IMR-90 (cell line): ENCODE measurements at regions of chr13 and their contacts with region 1.

Region 1: DNA sequence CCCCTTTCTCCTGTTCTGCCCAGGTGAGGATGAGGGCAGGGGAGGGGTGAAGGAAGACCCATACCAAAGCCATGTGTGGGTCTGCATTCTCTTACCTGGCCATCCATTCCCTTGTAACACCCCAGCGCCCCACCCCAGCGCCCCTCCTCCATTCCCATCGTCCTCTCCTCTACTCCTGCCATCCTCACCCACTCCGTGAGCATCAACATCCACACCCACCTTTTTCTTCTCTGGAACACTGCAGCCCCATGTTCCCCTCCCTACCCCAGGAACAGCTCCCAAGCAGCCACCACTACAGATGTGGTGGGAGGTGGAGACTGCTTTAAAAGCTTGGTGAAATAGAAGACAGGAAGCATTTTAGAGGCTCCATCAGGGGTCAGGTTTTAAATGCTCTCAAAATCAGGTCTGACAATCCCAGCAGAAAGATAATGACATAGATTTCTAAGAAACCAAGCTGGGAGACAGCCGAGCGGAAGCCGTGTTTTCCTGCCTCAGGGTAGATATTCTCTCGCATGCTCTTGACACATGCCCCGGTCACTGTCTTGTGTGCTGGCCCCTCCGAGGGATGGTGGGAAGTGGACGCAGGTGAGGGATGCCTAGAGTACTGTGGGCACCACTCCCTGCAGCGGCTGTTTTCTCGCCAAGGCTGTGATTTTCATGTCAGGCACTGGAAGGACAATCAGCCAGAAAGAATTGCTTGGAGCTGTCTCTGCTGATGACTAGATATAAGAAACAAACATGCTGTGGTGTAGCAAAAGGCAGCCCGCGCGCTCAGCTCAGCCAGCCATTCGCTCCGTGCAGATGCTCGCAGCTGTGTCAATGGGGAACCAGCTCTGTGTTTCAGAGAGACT is 9.8 kb downstream of the MEDAG start:
- DNase-seq: no peak
- ATAC-seq: no peak
- H3K4me3 ChIP-seq: no peak overlapping the region
- H3K27ac ChIP-seq: no peak overlapping the region
- H3K4me1 ChIP-seq: no peaks in the 10 kb centered on the region
- H3K27me3 ChIP-seq: peaks cover 7% of the 10 kb centered on the region
- CTCF ChIP-seq: no peak
- POLR2A ChIP-seq: no peak
- RAD21 ChIP-seq: no peak

Region 2: DNA sequence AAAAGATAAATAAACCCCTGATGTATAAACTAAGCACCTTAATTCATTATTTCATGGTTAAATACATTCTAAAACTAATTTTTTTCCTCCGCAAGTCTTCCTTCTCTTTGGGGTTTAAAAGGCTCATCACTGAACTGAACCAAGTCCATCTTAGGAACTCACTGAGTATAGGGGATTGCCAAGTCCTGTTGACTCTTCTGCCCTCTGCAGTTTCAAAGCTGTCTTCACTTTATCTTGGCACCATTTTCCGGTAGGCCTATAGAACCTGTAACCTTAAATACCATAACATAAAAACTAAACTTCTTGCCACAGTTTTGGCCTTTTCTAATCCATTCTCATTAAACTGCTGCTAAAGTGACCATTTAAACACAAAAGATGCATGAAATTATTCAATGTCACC is 364.7 kb before region 1 on chr13:
- CTCF ChIA-PET with region 1: no interaction called
- POLR2A ChIA-PET with region 1: no interaction called
- dilution Hi-C with region 1: no loop called
- in situ Hi-C with region 1: no loop called
- intact Hi-C with region 1: no loop called
- DNase-seq: peak; percentile 43
- ATAC-seq: 0 out of 2 replicates have a peak, but pooled peaks have one; percentile 27
- H3K4me3 ChIP-seq: no peak overlapping the region
- H3K27ac ChIP-seq: no peak overlapping the region
- H3K4me1 ChIP-seq: no peaks in the 10 kb centered on the region
- H3K27me3 ChIP-seq: no peaks in the 10 kb centered on the region
- CTCF ChIP-seq: peak; percentile 38
- POLR2A ChIP-seq: no peak
- RAD21 ChIP-seq: peak; percentile 40

Region 3: DNA sequence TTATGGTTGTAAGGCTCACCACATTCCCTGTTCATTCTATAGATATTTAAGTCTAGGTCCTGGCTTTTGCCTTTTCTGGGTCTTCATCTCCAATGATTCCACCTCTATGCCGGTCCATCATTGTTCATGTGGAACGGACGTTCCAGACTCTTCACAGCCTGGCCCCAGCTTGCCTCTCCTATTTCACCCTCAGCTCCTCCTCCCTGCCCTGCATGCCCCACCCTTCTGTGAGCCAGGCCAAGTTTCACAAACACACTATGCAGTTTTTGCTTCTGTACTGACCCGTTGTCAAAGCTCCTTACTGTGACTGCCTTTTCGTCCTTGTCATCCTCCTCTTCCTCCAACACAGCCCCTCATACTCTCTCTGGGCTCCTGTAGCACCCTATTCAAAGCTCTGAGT is 47.9 kb after region 1 on chr13:
- CTCF ChIA-PET with region 1: no interaction called
- POLR2A ChIA-PET with region 1: no interaction called
- dilution Hi-C with region 1: no loop called
- in situ Hi-C with region 1: no loop called
- intact Hi-C with region 1: loop called (anchors 5 kb)
- DNase-seq: peak; percentile 29
- ATAC-seq: peak; percentile 94
- H3K4me3 ChIP-seq: no peak overlapping the region
- H3K27ac ChIP-seq: no peak overlapping the region
- H3K4me1 ChIP-seq: peaks cover 7% of the 10 kb centered on the region
- H3K27me3 ChIP-seq: peaks cover 4% of the 10 kb centered on the region; the same call in 1 of the 2 replicates
- CTCF ChIP-seq: no peak
- POLR2A ChIP-seq: no peak
- RAD21 ChIP-seq: no peak

Region 4: DNA sequence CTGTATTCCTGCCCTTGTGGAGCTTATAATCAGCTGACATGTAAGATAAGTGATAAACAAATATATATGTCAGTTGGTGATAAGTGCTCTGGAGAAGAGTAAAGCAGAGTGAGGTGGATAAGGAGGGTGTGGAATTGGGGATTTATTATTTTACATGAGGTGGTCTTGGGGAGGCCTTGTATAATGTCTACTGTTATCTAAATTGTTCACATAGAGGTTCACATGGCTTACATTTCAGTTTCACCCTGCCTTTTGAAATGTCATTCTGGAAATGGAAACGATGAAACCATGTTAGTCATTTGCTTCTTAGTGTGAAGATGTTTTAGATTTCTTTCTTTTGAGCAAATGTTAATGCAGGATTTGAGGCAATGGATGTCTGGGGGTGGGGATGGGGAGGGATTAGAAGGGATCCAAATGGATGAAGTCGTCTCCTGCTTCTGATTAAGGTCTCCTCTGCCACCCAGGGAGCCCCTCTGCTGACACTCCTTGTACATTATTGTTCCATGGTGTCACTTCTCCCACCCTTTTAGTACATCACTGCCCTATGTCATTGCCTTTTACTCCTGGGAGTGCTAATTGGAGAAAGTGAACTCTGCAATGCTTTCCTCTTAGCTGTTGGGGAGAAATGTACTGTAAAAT is 297.9 kb after region 1 on chr13:
- CTCF ChIA-PET with region 1: no interaction called
- POLR2A ChIA-PET with region 1: no interaction called
- dilution Hi-C with region 1: no loop called
- in situ Hi-C with region 1: no loop called
- intact Hi-C with region 1: no loop called
- DNase-seq: peak; percentile 20
- ATAC-seq: peak; percentile 52
- H3K4me3 ChIP-seq: no peak overlapping the region
- H3K27ac ChIP-seq: no peak overlapping the region
- H3K4me1 ChIP-seq: peaks cover 5% of the 10 kb centered on the region; the same call in 1 of the 2 replicates
- H3K27me3 ChIP-seq: no peaks in the 10 kb centered on the region
- CTCF ChIP-seq: no peak
- POLR2A ChIP-seq: no peak
- RAD21 ChIP-seq: no peak